ENCODE measurements at regions of chr9 and their contacts with region 1.

Region 1: GRCh38 chr9:136051517-136052432 is 43.3 kb downstream of the NACC2 start:
- DNase-seq: peak; percentile 89
- H3K4me3 ChIP-seq: peak overlapping the region; percentile 35 to 57 (median 54)
- H3K27ac ChIP-seq: peak overlapping the region; percentile 83 to 90 (median 88)
- H3K4me1 ChIP-seq: peaks cover 0 to 98% (median 93%) of the 10 kb centered on the region in 4 donors
- H3K27me3 ChIP-seq: no peaks in the 10 kb centered on the region
- CTCF ChIP-seq: no peak
- EP300 ChIP-seq: peak in 2 of 4 donors; percentile 6 to 43
- POLR2A ChIP-seq: no peak

Region 2: GRCh38 chr9:136011703-136012521 is 39.9 kb before region 1 on chr9:
- intact Hi-C with region 1: loop called (anchors 5 kb)
- DNase-seq: peak; percentile 94
- H3K4me3 ChIP-seq: peak overlapping the region in 2 of 4 donors; percentile 5 to 21
- H3K27ac ChIP-seq: peak overlapping the region; percentile 70 to 83 (median 75)
- H3K4me1 ChIP-seq: peaks cover 0 to 53% (median 45%) of the 10 kb centered on the region in 4 donors
- H3K27me3 ChIP-seq: no peaks in the 10 kb centered on the region
- CTCF ChIP-seq: no peak
- EP300 ChIP-seq: no peak
- POLR2A ChIP-seq: no peak

Measured in sigmoid colon (tissue), 7 donors.